Motor neuron (in vitro differentiated cells): ENCODE measurements at regions of chr18 and their contacts with region 1.

Region 1: DNA sequence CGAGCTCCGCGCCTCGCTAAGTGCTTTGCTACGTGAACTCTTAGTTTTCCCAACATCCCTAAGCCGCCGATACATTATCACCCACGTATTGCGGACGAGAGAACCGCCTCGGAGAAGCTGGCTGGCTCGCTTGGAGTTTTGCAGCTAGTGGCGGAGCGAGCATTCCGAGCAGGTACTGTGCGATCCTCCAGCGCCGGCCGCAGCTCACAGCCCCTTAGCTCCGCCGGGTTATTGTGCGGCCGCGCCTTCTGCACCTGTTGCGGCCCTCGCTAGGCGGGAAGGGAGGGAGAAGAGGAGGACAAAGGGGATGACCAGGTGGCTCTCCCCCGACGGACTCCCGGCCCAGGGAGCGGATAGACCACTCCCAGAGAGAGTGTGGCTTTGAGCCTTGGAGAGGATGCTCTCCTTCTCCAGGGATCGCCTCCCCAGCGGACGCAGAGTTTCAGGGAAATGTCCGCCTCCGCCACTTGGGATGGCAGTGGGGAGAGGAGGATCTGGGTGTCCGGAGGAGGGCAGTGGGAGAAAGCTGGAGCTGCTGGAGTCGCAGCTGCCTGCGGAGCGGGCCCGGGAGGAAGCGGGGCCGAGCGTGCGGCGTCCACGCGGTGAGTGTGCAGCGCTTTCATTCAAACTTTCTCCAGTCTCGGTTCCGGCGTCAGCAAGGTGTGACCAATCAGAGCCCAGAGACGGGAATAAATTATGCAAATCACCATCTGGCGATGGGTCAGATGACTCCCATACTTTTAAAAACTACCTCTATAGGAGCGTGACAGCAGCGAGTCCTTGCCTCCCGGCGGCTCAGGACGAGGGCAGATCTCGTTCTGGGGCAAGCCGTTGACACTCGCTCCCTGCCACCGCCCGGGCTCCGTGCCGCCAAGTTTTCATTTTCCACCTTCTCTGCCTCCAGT is at the start of gene LIPG:
- ATAC-seq: peak; percentile 77 to 89 (median 85)
- H3K4me3 ChIP-seq: peak within 1 kb of the TSS; percentile 35 to 48 (median 43)
- H3K27ac ChIP-seq: no peak within 1 kb of the TSS
- H3K4me1 ChIP-seq: peaks cover 16 to 22% of the 10 kb centered on the region in 2 donors
- total RNA-seq, gene LIPG: 9.2 to 37.9 (median 16.7) TPM

Region 2: GRCh38 chr18:49728542-49728941 is 167.0 kb after region 1 on chr18:
- in situ Hi-C with region 1: loop called in 2 of 9 experiments (anchors 25 kb)
- ATAC-seq: peak in 3 of 8 experiments; percentile 4 to 38 (median 16)
- H3K4me3 ChIP-seq: no peak overlapping the region
- H3K27ac ChIP-seq: no peak overlapping the region
- H3K4me1 ChIP-seq: peaks cover 5 to 12% of the 10 kb centered on the region in 2 donors